Caco-2 (cell line): ENCODE measurements at regions of chr11 and their contacts with region 1.

Region 1: GRCh38 chr11:81246941-81247340 is 1486.7 kb downstream of the FAM181B start:
- DNase-seq: peak in 1 of 2 experiments; percentile 38
- H3K4me3 ChIP-seq: no peak overlapping the region
- H3K4me3 Mint-ChIP-seq: peak overlapping the region; percentile 14
- H3K27ac Mint-ChIP-seq: no peak overlapping the region
- H3K4me1 ChIP-seq: peaks cover 45% of the 10 kb centered on the region
- H3K4me1 Mint-ChIP-seq: peaks cover 30% of the 10 kb centered on the region
- H3K27me3 ChIP-seq: no peaks in the 10 kb centered on the region
- H3K27me3 Mint-ChIP-seq: no peaks in the 10 kb centered on the region
- CTCF ChIP-seq: no peak

Region 2: DNA sequence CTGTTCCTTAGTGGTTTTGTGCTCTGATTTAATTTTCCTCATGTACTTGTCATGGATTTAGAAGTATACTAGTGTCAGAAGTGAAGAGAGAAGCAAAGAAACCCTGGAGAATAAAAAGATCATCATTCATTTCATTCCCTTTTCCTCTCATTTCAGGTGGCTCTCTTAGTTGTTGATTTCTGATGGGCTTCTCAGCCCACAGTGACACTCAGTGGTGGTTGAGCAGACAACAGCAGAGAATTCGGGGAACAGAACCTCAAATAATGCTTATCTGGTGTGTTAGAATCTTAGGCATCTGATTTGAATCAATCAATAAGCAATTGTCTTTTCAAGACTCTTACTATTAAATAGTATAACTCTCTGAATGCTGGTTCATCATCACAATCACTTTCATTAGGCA is 197.4 kb after region 1 on chr11:
- CTCF ChIA-PET with region 1: no interaction called
- POLR2A ChIA-PET with region 1: no interaction called
- intact Hi-C with region 1: loop called (anchors 2 kb)
- DNase-seq: peak in 1 of 2 experiments; percentile 18
- H3K4me3 ChIP-seq: no peak overlapping the region
- H3K4me3 Mint-ChIP-seq: no peak overlapping the region
- H3K27ac Mint-ChIP-seq: no peak overlapping the region
- H3K4me1 ChIP-seq: no peaks in the 10 kb centered on the region
- H3K4me1 Mint-ChIP-seq: no peaks in the 10 kb centered on the region
- H3K27me3 ChIP-seq: no peaks in the 10 kb centered on the region
- H3K27me3 Mint-ChIP-seq: no peaks in the 10 kb centered on the region
- CTCF ChIP-seq: peak; percentile 49 to 58